Activated CD4-positive, alpha-beta memory T cell treated with anti-CD3 and anti-CD28 coated beads for 36 hours (primary cell): ENCODE measurements at regions of chr12 and their contacts with region 1.

Region 1: DNA sequence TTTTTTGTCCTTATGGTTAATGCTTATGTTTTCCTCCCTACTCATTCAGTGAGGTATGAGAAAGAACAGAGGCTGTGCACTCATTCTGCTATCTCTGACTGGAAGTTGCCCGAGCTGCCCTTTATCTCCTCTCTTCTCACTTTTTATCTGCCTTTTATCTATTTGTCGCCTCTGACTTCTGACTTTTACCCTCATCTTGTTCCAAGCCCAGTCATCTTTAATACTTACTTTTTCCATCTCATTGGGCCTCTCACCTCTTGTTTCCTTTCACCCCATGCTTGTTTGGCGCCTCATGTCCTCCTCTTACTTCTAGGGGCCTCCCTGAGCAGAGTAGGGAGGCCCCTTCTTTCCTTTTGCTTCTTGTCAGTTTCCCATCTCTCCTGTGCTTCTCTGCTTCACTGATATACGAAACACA is 50.7 kb downstream of the DIP2B start:
- DNase-seq: peak; percentile 66
- H3K4me3 Mint-ChIP-seq: peak overlapping the region; percentile 58
- H3K27ac Mint-ChIP-seq: peak overlapping the region; percentile 94
- H3K4me1 Mint-ChIP-seq: peaks cover 53% of the 10 kb centered on the region
- H3K27me3 Mint-ChIP-seq: no peaks in the 10 kb centered on the region

Region 2: GRCh38 chr12:50517456-50518048 is 37.9 kb before region 1 on chr12:
- CTCF ChIA-PET with region 1: no interaction called
- POLR2A ChIA-PET with region 1: interaction called, 5 read pairs
- intact Hi-C with region 1: loop called (anchors 5 kb)
- DNase-seq: no peak
- H3K4me3 Mint-ChIP-seq: no peak overlapping the region
- H3K27ac Mint-ChIP-seq: no peak overlapping the region
- H3K4me1 Mint-ChIP-seq: peaks cover 53% of the 10 kb centered on the region
- H3K27me3 Mint-ChIP-seq: no peaks in the 10 kb centered on the region